HepG2 (cell line): ENCODE measurements at regions of chr2 and their contacts with region 1.

Region 1: DNA sequence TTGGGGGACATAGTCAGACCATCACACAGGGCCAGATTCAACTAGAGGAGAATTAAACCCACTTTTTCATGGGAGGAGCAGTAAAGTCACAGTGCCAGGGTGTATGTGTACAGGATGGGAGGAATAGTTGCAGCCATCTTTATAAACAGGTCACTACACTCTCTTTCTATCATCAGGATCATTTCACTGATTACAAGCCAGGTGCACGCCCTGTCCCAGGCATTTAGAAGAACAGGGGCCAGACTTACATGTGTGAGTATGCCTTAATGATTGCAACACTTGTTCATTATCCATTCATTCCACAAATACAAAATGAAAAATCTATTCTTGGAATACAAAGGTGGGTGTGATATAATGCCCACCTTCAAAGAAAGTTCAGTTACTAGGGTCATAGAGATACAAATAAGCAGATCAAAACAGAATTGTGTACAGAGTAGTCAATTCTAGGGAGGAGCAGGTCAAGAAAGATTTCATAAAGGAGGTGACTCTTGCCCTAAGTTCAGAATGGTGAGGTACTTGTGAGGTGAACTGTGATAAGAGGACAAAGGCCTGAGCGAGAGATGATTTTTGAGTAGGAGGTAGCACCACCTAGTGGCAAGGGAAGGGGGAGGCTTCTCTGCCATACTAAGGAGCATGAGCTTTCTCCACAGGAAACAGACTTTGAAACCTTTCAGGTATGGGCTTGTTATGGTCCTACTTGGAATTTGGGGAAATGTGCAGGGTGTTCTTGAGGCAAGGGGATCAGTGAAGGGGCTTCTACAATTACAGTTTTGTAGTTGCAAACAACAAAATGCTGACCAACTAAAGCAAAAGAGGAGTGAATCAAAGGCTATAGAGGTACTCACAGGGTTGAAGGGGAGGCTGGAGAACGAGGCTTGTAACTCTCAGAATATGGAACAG is 156.3 kb downstream of the SUCLG1 start:
- DNase-seq: peak; percentile 83
- ATAC-seq: peak; percentile 69
- H3K4me3 ChIP-seq: no peak overlapping the region
- H3K27ac ChIP-seq: peak overlapping the region; percentile 39
- H3K4me1 ChIP-seq: peaks cover 57% of the 10 kb centered on the region
- H3K27me3 ChIP-seq: no peaks in the 10 kb centered on the region
- CTCF ChIP-seq: peak; percentile 94
- EP300 ChIP-seq: peak; percentile 28 to 90; a peak in 2 of 4 replicates
- POLR2A ChIP-seq: no peak
- RAD21 ChIP-seq: peak; percentile 91

Region 2: GRCh38 chr2:83261591-83262136 is 1041.1 kb before region 1 on chr2:
- CTCF ChIA-PET with region 1: no interaction called
- POLR2A ChIA-PET with region 1: interaction called, 3 read pairs
- in situ Hi-C with region 1: no loop called
- intact Hi-C with region 1: loop called (anchors 2 kb)
- DNase-seq: peak; percentile 50
- ATAC-seq: peak; percentile 94
- H3K4me3 ChIP-seq: no peak overlapping the region
- H3K27ac ChIP-seq: peak overlapping the region; percentile 19
- H3K4me1 ChIP-seq: peaks cover 9% of the 10 kb centered on the region
- H3K27me3 ChIP-seq: no peaks in the 10 kb centered on the region; a peak in 1 of 5 replicates
- CTCF ChIP-seq: no peak
- EP300 ChIP-seq: peak in 1 of 2 experiments; percentile 63; a peak in 2 of 4 replicates
- POLR2A ChIP-seq: no peak
- RAD21 ChIP-seq: no peak

Region 3: GRCh38 chr2:83827618-83828017 is 475.1 kb before region 1 on chr2:
- CTCF ChIA-PET with region 1: no interaction called
- POLR2A ChIA-PET with region 1: no interaction called
- in situ Hi-C with region 1: no loop called
- intact Hi-C with region 1: loop called (anchors 5 kb)
- DNase-seq: no peak
- ATAC-seq: no peak
- H3K4me3 ChIP-seq: no peak overlapping the region
- H3K27ac ChIP-seq: no peak overlapping the region
- H3K4me1 ChIP-seq: no peaks in the 10 kb centered on the region
- H3K27me3 ChIP-seq: no peaks in the 10 kb centered on the region
- CTCF ChIP-seq: no peak; the same call in 1 of the 2 replicates
- EP300 ChIP-seq: no peak
- POLR2A ChIP-seq: no peak
- RAD21 ChIP-seq: no peak

Region 4: DNA sequence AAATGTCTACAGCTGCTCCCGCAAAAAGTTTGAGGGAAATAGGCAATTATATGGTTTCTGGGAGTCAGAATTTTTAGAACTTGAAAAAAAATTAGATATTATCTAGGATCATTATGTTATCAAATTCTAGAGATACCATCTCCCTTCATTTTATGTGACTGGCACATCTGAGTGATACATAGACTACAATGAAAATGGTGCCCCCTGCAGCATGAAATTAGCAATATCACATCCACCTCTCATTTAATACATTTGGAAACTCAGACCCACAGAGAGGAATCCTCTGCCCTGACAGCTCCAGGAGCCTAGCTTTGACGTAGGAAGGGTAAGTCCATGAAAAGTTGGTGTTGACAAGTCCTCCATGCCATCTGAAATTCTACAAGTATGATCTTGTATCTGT is 225.3 kb before region 1 on chr2:
- CTCF ChIA-PET with region 1: no interaction called
- POLR2A ChIA-PET with region 1: no interaction called
- in situ Hi-C with region 1: no loop called
- intact Hi-C with region 1: loop called (anchors 5 kb)
- DNase-seq: peak; percentile 20
- ATAC-seq: peak; percentile 79
- H3K4me3 ChIP-seq: no peak overlapping the region
- H3K27ac ChIP-seq: no peak overlapping the region
- H3K4me1 ChIP-seq: no peaks in the 10 kb centered on the region
- H3K27me3 ChIP-seq: no peaks in the 10 kb centered on the region
- CTCF ChIP-seq: peak; percentile 57
- EP300 ChIP-seq: no peak
- POLR2A ChIP-seq: no peak
- RAD21 ChIP-seq: no peak

Region 5: GRCh38 chr2:84181927-84182326 is 120.8 kb before region 1 on chr2:
- CTCF ChIA-PET with region 1: no interaction called
- POLR2A ChIA-PET with region 1: interaction called, 3 read pairs
- in situ Hi-C with region 1: no loop called
- intact Hi-C with region 1: loop called (anchors 5 kb)
- DNase-seq: no peak
- ATAC-seq: peak; percentile 39
- H3K4me3 ChIP-seq: no peak overlapping the region
- H3K27ac ChIP-seq: no peak overlapping the region
- H3K4me1 ChIP-seq: peaks cover 24% of the 10 kb centered on the region
- H3K27me3 ChIP-seq: no peaks in the 10 kb centered on the region
- CTCF ChIP-seq: no peak
- EP300 ChIP-seq: no peak
- POLR2A ChIP-seq: no peak
- RAD21 ChIP-seq: no peak

Region 6: GRCh38 chr2:84757648-84758047 is 454.9 kb after region 1 on chr2:
- CTCF ChIA-PET with region 1: no interaction called
- POLR2A ChIA-PET with region 1: no interaction called
- in situ Hi-C with region 1: no loop called
- intact Hi-C with region 1: no loop called
- DNase-seq: no peak
- ATAC-seq: no peak
- H3K4me3 ChIP-seq: no peak overlapping the region
- H3K27ac ChIP-seq: no peak overlapping the region
- H3K4me1 ChIP-seq: no peaks in the 10 kb centered on the region
- H3K27me3 ChIP-seq: no peaks in the 10 kb centered on the region; a peak in 1 of 5 replicates
- CTCF ChIP-seq: no peak
- EP300 ChIP-seq: no peak
- POLR2A ChIP-seq: no peak
- RAD21 ChIP-seq: no peak